ENCODE measurements at regions of chr7 and their contacts with region 1.

Region 1: GRCh38 chr7:96414931-96415292 is 93.0 kb upstream of the SLC25A13 start:
- DNase-seq: peak in 1 of 5 donors; percentile 27
- ATAC-seq: peak in 3 of 4 donors; percentile 57 to 78 (median 66)
- H3K4me3 ChIP-seq: no peak overlapping the region
- H3K27ac ChIP-seq: no peak overlapping the region
- H3K4me1 ChIP-seq: peaks cover 0 to 24% (median 2%) of the 10 kb centered on the region in 12 donors
- H3K27me3 ChIP-seq: no peaks in the 10 kb centered on the region
- CTCF ChIP-seq: peak; percentile 32 to 66 (median 50)
- POLR2A ChIP-seq: no peak

Region 2: DNA sequence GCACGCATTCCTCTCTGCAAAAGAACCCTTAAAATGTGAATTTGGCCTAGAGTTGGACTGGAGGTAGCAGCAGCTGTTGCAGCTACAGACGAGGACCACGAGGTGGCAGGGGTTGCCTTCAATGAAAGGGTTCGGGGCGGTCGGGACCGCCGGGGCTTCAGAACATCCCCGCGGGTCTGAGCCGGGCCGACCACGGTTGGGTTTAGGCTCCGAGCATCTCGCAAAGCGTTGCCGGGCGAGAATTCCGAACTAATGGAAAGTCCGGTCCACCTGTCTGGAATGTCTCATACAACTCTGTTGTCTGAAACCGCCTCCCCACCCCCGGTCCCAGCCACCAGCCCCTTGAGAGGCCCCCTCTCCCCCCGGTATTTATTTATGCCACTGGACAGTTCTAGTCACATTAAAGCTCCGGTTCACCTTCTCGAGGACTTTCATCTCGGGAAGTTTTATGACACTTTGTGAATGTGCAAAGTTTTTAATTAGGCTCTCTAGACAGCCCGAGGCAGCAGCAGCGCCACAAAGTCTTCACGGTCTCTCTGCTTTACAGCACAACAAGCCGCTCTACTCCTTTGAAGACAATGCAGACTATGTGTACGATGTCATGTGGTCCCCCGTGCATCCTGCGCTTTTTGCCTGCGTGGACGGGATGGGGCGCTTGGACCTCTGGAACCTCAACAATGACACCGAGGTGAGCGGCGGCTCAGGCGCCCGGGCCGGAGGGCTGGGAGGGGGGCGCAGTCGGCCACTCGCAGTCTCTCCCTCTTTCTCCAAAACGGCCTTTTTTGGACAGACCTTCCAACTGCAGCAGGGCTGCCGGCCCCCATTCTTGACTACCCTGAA is 339.2 kb before region 1 on chr7:
- intact Hi-C with region 1: loop called in 1 of 10 experiments (anchors 10 kb)
- DNase-seq: peak; percentile 48 to 73 (median 59)
- ATAC-seq: peak; percentile 89 to 98 (median 95)
- H3K4me3 ChIP-seq: peak overlapping the region; percentile 24 to 71 (median 54)
- H3K27ac ChIP-seq: no peak overlapping the region
- H3K4me1 ChIP-seq: peaks cover 0 to 9% (median 4%) of the 10 kb centered on the region in 12 donors
- H3K27me3 ChIP-seq: peaks cover 0 to 23% (median 0%) of the 10 kb centered on the region in 9 donors
- CTCF ChIP-seq: peak; percentile 66 to 91 (median 80)
- POLR2A ChIP-seq: no peak

Region 3: DNA sequence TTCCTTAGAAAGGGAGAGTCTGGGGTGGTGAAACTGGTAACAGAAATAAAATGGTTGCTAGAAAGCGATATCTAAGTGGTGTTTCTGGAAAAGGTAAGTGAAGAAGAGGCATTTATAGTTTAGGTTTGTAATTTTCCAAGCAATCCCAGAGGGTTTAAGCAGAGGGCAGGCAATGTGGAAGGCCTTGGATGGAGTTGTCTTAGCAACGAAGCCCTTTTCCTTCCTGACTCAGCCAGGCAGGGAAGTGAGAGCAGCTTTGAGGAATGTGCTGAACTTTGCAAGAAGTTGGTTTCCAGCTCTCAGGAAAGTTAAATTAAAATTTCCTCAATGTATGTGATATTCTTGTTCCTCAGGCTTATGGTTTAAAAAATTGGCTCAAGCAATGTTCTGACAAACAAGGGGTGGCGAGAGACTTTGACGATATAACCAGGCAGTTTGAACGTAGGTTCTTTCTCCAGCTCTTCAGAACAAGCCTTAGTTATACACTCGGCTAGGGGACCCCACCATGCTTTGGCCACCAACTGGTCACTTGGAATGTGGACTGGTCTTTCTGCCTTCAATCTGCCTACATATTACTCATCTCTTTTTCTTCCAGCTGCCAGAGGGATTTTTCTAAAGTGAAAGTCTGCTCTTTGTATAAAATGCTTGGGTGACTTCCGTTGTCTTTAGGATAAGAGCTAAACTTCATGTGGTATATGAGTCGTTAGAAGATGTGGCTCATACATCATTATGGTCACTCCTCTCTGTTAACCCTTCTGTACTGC is 26.1 kb before region 1 on chr7:
- intact Hi-C with region 1: no loop called
- DNase-seq: peak in 3 of 5 donors; percentile 31 to 46 (median 33)
- ATAC-seq: peak; percentile 51 to 98 (median 90)
- H3K4me3 ChIP-seq: peak overlapping the region in 1 of 12 donors; percentile 11
- H3K27ac ChIP-seq: peak overlapping the region in 11 of 12 donors; percentile 31 to 77 (median 65)
- H3K4me1 ChIP-seq: peaks cover 0 to 13% (median 4%) of the 10 kb centered on the region in 12 donors
- H3K27me3 ChIP-seq: no peaks in the 10 kb centered on the region
- CTCF ChIP-seq: no peak
- POLR2A ChIP-seq: no peak

Region 4: DNA sequence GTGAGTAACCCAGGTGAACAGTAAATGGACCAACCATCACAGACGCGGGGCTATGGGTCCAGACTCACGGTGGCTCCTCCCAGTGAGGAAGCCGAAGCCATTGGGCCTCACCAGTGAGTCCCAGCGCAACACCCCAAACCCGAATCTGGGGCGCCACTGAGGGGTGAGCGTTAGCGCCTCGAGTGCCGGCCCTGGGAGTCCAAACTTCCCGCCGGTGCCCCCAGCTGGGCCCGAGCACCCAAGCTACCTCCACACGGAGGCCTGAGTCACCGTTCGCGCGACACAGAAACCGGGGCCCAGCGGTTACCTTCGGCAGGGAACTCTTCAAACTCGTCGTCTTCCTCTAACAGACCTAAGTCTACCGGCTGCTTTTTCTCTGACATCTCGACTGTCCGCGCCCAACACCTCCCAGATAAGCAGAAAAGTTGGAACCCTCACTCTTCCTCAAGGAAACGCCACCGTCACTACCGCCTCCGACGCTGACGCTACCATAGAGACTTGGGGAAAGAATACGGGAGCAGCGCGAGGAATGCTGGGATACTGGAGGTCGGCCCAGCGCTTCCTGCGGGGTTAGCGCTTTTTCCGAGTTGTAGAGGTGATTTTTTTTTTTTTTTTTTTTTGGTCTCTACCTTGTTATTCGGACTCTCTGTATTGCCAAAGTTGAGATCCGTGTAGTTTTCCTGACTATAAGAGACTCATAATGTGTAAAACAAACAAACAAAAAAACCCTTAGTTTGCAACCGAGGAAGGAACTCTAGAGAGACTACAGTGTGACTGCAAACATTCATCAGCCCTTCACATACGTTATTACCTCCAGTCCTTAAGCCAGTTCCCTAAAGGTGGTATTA is 294.7 kb after region 1 on chr7 and contains the start of gene SEM1:
- intact Hi-C with region 1: loop called in 1 of 10 experiments (anchors 10 kb)
- DNase-seq: peak; percentile 87 to 93 (median 90)
- ATAC-seq: peak; percentile 98 to 100 (median 100)
- H3K4me3 ChIP-seq: peak within 1 kb of the TSS; percentile 61 to 99 (median 90)
- H3K27ac ChIP-seq: peak within 1 kb of the TSS; percentile 60 to 93 (median 89)
- H3K4me1 ChIP-seq: peaks cover 6 to 29% (median 22%) of the 10 kb centered on the region in 12 donors
- H3K27me3 ChIP-seq: no peaks in the 10 kb centered on the region
- CTCF ChIP-seq: no peak
- POLR2A ChIP-seq: peak in 1 of 2 donors; percentile 41
- total RNA-seq, gene SEM1: 25.5 to 66.2 (median 42.5) TPM

Region 5: GRCh38 chr7:96870156-96870555 is 455.2 kb after region 1 on chr7:
- intact Hi-C with region 1: loop called in 1 of 10 experiments (anchors 10 kb)
- DNase-seq: no peak
- ATAC-seq: no peak
- H3K4me3 ChIP-seq: no peak overlapping the region
- H3K27ac ChIP-seq: no peak overlapping the region
- H3K4me1 ChIP-seq: no peaks in the 10 kb centered on the region
- H3K27me3 ChIP-seq: no peaks in the 10 kb centered on the region
- CTCF ChIP-seq: no peak
- POLR2A ChIP-seq: no peak